ENCODE measurements at regions of chr7 and their contacts with region 1.

Region 1: DNA sequence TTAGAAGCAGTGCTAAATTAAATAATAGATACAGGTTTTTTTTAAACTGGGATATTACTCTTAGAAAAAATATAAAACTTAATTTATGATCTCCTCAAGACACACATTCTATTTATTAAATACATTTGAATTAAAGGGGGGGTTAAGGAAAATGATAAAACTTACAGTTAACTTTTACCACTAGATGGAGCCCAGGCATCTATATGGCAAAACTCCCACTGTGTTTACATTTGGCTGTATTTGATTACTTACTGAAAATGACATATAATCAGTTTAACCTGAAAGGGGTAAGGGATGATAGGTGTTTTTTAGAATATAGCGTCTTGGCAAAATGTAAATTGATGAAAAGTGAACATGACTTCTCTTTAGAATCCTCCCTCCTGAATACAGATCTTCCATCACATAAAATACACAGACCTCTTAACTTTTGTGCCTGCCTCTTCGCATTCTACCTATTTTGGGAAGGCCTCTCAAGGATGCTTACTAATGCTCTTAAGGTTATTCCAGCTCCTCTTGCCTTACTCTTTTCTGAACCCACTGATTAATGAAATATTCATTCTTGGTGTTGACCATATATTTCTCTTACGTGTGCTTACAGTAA is 235.7 kb downstream of the AGMO start:
- DNase-seq: no peak
- ATAC-seq: no peak
- H3K4me3 ChIP-seq: no peak overlapping the region
- H3K27ac ChIP-seq: no peak overlapping the region
- H3K4me1 ChIP-seq: peaks cover 0 to 10% (median 0%) of the 10 kb centered on the region in 9 donors
- H3K27me3 ChIP-seq: no peaks in the 10 kb centered on the region
- CTCF ChIP-seq: peak; percentile 32 to 79 (median 60)

Region 2: DNA sequence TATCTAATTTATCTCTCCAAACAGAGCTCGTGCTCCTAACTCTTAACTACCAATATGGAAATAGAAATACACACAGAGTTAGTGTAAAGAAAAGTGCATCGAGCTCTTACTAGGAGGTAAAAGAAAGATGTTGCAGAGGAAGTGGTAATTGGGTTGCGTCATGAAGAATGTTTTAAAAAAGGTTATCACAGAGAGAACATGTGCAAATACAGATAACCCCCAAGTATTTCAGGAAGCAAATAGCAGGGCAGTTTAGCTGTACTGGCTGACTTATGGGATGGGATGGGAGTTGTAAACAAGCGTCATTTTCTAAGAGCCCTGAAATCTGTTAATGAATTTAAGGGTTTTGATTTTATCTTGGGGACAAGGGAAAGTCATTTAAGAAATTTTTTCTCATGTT is 81.8 kb after region 1 on chr7:
- intact Hi-C with region 1: no loop called
- DNase-seq: no peak
- ATAC-seq: no peak
- H3K4me3 ChIP-seq: no peak overlapping the region
- H3K27ac ChIP-seq: no peak overlapping the region
- H3K4me1 ChIP-seq: no peaks in the 10 kb centered on the region
- H3K27me3 ChIP-seq: no peaks in the 10 kb centered on the region
- CTCF ChIP-seq: no peak

Region 3: DNA sequence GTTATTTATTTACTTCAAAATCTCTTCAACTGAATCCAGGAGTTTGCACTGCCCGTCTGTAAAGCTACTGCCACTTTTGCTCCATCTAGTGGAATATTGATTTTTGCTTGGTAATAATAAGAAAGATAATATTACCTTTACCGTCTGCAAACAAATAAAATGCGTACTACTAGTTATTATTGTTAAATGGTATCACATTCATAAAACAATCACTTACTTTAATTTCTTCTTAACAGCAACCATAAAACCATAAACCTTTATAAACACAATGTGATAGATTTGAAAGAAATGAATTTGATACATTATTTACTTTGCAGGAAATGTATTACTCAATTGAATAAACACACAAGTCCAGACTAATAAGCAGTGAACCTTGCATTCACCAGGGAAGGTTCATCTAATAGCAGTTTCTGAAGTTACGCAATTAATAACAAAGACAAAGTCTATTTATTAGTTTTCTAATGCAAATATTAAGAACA is 229.3 kb after region 1 on chr7:
- intact Hi-C with region 1: loop called in 6 of 10 experiments (anchors 5 to 10 kb)
- DNase-seq: no peak
- ATAC-seq: peak in 1 of 8 donors; percentile 52
- H3K4me3 ChIP-seq: no peak overlapping the region
- H3K27ac ChIP-seq: peak overlapping the region in 2 of 10 donors; percentile 79 to 89
- H3K4me1 ChIP-seq: peaks cover 0 to 42% (median 0%) of the 10 kb centered on the region in 9 donors
- H3K27me3 ChIP-seq: no peaks in the 10 kb centered on the region
- CTCF ChIP-seq: peak in 7 of 9 donors; percentile 7 to 58 (median 43)

Region 4: DNA sequence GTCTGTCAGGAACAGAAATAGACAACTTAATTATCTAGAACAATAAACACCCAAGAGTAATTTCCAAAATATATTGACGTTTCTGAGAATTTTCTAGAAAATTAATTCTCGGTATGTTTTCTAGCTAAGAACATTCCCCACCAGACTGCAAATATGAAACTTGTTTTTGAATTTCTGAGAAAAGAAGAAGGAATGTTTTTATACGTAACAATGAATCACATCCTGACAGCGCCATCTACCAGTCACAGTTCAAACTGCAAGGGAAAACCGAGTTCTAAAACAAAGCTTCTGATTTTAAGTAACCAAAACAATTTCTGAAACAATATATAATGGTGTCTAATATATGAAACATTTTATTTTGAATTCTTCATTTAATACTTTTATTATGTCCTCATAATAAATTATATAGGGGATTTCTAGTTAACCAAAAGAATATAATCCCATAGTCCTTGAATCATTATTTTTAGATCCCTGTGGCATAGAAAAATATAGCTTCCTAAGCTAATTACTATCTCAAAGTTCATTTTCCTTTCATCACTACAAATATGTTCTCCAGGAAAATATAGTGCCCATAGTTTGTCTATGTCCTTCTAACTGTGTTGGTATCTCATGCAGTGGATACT is 394.8 kb after region 1 on chr7:
- intact Hi-C with region 1: loop called in 8 of 10 experiments (anchors 2 to 10 kb)
- DNase-seq: peak in 1 of 2 donors; percentile 52
- ATAC-seq: no peak
- H3K4me3 ChIP-seq: no peak overlapping the region
- H3K27ac ChIP-seq: peak overlapping the region in 3 of 10 donors; percentile 5 to 34 (median 9)
- H3K4me1 ChIP-seq: peaks cover 0 to 17% (median 4%) of the 10 kb centered on the region in 9 donors
- H3K27me3 ChIP-seq: no peaks in the 10 kb centered on the region
- CTCF ChIP-seq: peak; percentile 38 to 89 (median 72)